Colonic mucosa (tissue), 4 donors: ENCODE measurements at regions of chr2 and their contacts with region 1.

Region 1: DNA sequence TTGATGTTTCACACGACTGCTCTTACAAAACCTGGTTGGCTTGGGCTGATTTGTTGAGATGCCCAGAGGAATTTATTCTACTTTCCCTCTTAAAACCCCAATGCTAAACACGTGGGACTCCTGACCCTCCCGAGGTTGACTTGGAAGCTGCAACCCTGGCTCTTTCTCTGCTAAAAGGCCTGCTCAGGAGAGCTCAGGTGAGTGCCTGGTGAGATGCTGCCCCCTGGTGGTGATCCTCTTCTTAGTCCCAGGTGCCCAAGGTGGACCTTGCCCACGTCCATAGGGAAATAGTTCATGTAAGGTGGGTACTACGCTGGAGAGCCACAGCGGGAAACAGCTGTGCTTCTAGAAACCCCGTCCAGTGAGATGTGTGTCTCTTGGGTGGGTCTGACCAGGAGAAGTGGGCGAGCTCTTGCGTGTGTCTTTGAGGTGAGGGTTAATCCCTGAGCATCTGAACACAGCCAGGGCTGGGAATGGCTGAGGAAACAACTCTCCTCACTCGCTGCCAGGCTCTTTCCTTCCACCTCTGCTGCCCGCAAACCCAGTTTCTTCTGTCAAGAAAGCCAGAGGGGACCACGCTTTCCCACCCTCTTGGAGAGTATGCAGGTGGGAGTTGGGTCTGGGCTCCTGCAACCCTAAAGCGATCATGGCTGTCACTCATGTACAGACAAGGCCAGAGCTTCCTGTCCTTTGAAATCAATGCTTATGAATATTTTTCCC is 25.5 kb upstream of the PXDN start:
- DNase-seq: peak; percentile 82
- H3K4me3 ChIP-seq: no peak overlapping the region
- H3K27ac ChIP-seq: no peak overlapping the region
- H3K4me1 ChIP-seq: no peaks in the 10 kb centered on the region
- H3K27me3 ChIP-seq: no peaks in the 10 kb centered on the region
- CTCF ChIP-seq: peak; percentile 81

Region 2: DNA sequence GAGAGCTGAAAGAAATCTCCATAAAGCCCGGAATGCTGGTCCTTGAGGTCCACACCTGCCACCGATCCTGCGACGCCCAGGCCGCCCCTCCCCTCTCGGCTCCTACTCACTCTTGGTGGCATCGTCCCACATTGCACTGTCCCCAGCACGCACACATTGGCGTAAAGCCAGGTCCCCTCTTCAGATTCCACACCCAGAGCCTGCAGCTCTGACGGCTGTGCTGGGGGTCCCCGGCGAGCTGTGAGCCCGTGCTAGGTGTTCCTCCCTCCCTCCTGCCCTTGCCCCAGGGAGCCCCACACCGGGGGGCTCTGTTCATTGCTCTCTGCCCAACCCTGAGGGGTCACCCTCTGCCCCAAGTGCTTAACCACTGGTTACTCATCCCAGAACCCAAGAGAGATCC is 348.1 kb before region 1 on chr2:
- intact Hi-C with region 1: no loop called
- DNase-seq: no peak
- H3K4me3 ChIP-seq: no peak overlapping the region
- H3K27ac ChIP-seq: no peak overlapping the region
- H3K4me1 ChIP-seq: no peaks in the 10 kb centered on the region
- H3K27me3 ChIP-seq: no peaks in the 10 kb centered on the region
- CTCF ChIP-seq: no peak

Region 3: DNA sequence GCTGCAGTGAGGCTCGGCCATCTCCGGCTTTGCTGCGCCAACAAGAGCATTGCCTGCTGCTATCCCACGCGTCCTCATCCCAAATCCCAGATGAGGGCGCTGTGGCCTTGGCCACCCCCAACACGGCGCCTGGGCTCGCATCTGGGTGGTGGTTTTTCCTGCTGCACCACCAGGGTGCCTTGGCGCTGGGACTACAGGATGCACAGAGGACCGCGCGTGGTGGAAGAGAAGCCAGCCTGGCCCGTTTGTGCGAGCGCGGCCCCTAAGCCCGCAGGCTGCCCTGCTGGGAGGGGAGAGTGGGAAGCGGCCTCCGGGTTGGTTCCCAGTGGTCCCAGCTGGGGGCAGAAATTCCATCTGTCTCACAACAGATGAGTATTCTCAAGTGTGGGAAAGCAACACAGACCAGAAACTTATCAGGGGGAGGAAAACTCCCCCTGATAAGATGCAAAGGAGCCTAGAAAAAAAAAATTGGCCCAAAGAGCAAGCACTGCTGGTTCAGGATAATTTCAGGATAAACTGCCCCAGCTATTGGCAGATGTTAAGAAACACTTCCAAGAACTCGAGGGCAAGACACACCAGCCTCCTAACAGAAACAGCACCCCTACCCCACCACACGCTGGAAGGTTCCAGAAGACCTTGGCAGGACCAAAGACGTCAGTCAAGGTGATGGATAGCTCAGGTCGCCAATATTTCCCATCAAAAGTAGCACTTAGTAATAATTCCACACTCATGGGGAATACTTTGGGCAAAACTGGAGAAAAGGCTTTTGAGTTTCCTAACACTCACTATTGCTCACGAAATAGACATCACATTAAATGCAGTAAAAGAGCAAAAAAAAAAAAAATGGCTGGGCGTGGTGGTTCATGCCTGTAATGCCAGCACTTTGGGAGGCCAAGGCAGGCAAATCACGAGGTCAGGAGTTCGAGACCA is 177.6 kb before region 1 on chr2:
- intact Hi-C with region 1: loop called (anchors 5 kb)
- DNase-seq: peak; percentile 68
- H3K4me3 ChIP-seq: no peak overlapping the region
- H3K27ac ChIP-seq: no peak overlapping the region
- H3K4me1 ChIP-seq: peaks cover 3% of the 10 kb centered on the region
- H3K27me3 ChIP-seq: no peaks in the 10 kb centered on the region
- CTCF ChIP-seq: peak; percentile 50